Activated CD4-positive, alpha-beta memory T cell treated with anti-CD3 and anti-CD28 coated beads, Interleukin-2, amount 10 ng/mL, durations not matched to agents 7 days and 5 days (primary cell): ENCODE measurements at regions of chr3 and their contacts with region 1.

Region 1: DNA sequence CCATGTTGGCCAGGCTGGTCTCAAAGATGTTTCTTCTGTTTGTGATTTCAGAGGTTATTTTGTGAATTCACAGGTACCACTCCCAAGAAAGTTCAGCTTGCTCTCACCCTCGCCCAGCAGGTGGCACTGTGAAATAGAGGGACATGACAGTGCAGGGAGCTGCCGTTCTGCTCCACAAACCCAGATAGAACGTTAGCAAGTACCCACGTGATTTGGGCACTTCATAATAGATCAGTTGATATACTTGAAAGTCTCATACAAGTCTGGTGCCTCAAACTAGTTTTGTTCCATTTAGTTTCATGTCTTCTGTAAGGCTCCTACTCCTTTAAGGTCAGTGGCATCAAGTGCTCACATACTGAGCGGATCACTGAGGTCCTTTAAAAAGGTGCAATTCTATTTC is 45.5 kb downstream of the FILIP1L start:
- DNase-seq: peak; percentile 87
- H3K4me3 Mint-ChIP-seq: no peak overlapping the region
- H3K27ac Mint-ChIP-seq: no peak overlapping the region
- H3K4me1 Mint-ChIP-seq: peaks cover 46% of the 10 kb centered on the region
- H3K27me3 Mint-ChIP-seq: no peaks in the 10 kb centered on the region

Region 2: GRCh38 chr3:99974962-99975361 is 93.9 kb before region 1 on chr3:
- CTCF ChIA-PET with region 1: no interaction called
- POLR2A ChIA-PET with region 1: no interaction called
- DNase-seq: no peak
- H3K4me3 Mint-ChIP-seq: no peak overlapping the region
- H3K27ac Mint-ChIP-seq: no peak overlapping the region
- H3K4me1 Mint-ChIP-seq: peaks cover 9% of the 10 kb centered on the region
- H3K27me3 Mint-ChIP-seq: no peaks in the 10 kb centered on the region

Region 3: GRCh38 chr3:100089812-100090668 is 21.2 kb after region 1 on chr3:
- CTCF ChIA-PET with region 1: interaction called, 40 read pairs
- POLR2A ChIA-PET with region 1: interaction called, 21 read pairs
- DNase-seq: peak; percentile 51
- H3K4me3 Mint-ChIP-seq: no peak overlapping the region
- H3K27ac Mint-ChIP-seq: no peak overlapping the region
- H3K4me1 Mint-ChIP-seq: peaks cover 40% of the 10 kb centered on the region
- H3K27me3 Mint-ChIP-seq: peaks cover 4% of the 10 kb centered on the region

Region 4: DNA sequence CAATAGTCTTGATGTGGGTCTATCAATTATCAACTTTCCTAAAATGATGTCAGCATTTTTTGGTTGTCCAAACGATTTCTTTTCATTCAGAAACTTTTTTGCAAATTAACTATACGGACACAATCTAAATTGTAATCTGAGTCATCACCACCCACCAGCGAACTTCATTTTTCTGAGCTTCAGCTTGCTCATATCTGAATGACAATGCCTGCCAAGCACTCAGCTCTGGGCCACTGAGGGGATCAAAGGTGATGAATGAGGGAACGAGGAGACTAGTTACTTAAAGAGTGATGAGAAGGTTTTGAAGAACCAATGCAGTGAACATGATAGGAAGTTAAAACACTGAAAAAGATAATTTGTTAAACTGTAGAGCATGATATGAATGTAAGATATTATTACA is 177.1 kb after region 1 on chr3:
- CTCF ChIA-PET with region 1: interaction called, 14 read pairs
- POLR2A ChIA-PET with region 1: no interaction called
- DNase-seq: no peak
- H3K4me3 Mint-ChIP-seq: no peak overlapping the region
- H3K27ac Mint-ChIP-seq: no peak overlapping the region
- H3K4me1 Mint-ChIP-seq: peaks cover 3% of the 10 kb centered on the region
- H3K27me3 Mint-ChIP-seq: no peaks in the 10 kb centered on the region

Region 5: DNA sequence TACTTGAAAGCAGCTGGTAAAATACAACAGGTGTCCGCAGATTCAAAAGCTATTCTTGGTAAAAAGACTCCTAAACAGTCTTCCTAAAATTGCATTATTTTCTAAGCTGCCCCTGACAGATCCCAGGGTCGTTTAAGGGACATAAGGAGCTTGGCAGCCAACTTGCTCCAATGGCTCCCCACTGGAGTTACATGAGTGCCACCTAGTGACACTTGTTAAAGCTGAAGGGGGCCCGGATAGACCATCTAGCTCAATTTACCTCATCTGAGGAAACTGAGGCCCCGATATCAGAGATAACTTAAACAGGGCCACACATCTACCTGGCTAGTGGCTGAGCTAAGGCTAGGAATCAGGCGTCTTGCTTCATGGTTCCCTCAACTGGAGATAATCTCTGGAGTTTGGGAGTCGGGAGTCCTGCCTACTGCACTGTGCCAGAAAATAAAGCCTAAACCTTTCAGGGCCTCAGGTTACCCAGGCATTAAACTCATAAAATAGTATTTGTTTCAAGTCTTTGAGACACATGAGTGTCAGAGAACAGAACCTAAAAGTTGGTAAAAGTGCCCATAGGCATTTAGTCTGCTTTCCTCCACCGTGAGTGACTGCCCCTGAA is 185.4 kb after region 1 on chr3:
- CTCF ChIA-PET with region 1: interaction called, 91 read pairs
- POLR2A ChIA-PET with region 1: interaction called, 11 read pairs
- DNase-seq: peak; percentile 56
- H3K4me3 Mint-ChIP-seq: no peak overlapping the region
- H3K27ac Mint-ChIP-seq: no peak overlapping the region
- H3K4me1 Mint-ChIP-seq: no peaks in the 10 kb centered on the region
- H3K27me3 Mint-ChIP-seq: no peaks in the 10 kb centered on the region

Region 6: DNA sequence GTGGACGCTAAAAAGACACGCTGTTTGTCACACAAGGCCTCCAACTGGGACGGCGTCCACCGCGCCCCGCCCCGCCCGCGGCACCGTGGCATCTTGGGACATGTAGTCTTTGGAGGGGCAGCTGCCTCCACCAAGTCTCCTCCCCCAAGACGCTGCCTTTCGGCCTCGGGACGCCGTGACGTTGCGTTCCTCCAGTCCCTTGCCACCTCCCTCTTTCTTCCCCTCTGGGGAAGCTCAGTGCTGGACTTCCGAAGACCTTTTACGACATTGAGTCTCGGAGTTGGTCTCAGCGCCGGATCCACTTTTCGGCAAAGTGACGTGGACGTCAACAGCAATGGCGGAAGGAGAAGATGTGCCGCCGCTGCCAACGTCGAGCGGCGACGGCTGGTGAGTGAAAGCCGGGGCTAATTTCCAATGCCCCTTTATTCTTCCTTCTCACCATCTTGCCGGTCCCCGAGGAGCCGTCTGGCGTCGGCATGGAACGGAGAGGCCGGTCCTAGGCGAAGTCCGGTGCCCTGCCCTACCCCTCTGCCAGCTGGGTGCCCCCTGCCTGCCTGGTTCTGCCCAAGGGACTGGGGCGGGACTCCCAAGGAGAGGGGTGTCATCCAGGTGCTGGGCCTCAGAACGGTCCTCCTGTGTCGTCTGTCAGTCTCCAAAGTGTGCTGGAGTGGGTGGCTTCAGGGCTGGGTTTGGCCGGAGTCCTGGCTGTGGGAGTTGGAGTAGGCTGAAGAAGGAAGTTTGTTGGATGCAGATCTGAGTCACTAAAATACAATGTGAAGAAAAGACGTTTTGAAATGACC is 192.1 kb after region 1 on chr3 and contains the start of gene TBC1D23:
- CTCF ChIA-PET with region 1: interaction called, 91 read pairs
- POLR2A ChIA-PET with region 1: interaction called, 10 read pairs
- DNase-seq: peak; percentile 98
- H3K4me3 Mint-ChIP-seq: peak within 1 kb of the TSS; percentile 96
- H3K27ac Mint-ChIP-seq: peak within 1 kb of the TSS; percentile 84
- H3K4me1 Mint-ChIP-seq: peaks cover 42% of the 10 kb centered on the region
- H3K27me3 Mint-ChIP-seq: no peaks in the 10 kb centered on the region
- total RNA-seq, gene TBC1D23: 26.5 to 29.3 TPM

Region 7: DNA sequence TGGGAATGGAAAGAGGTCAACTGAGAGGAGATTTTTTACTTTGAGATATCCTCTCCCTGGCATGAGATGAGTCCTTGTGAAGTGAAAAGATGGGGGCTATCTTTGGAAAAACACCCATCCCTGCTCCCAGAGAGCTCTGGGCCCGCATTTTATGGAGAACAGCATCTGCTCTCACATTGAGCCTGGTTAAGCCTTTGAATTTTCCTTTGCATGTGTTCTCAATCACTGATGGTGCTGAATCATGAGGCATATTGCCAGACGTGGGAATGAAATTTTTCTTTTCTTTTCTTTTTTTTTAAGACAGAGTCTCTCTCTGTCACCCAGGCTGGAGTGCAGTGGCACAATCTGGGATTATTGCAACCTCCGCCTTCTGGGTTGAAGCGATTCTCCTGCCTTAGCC is 448.0 kb after region 1 on chr3:
- CTCF ChIA-PET with region 1: no interaction called
- POLR2A ChIA-PET with region 1: no interaction called
- DNase-seq: no peak
- H3K4me3 Mint-ChIP-seq: no peak overlapping the region
- H3K27ac Mint-ChIP-seq: no peak overlapping the region
- H3K4me1 Mint-ChIP-seq: no peaks in the 10 kb centered on the region
- H3K27me3 Mint-ChIP-seq: no peaks in the 10 kb centered on the region